ENCODE measurements at regions of chr5 and their contacts with region 1.

Region 1: GRCh38 chr5:141412854-141413539 is at the start of gene PCDHGA10:
- DNase-seq: peak in 1 of 6 donors; percentile 46
- ATAC-seq: peak; percentile 55 to 68 (median 68)
- H3K4me3 ChIP-seq: peak within 1 kb of the TSS in 1 of 4 donors; percentile 18
- H3K27ac ChIP-seq: no peak within 1 kb of the TSS
- H3K4me1 ChIP-seq: no peaks in the 10 kb centered on the region
- H3K27me3 ChIP-seq: no peaks in the 10 kb centered on the region
- CTCF ChIP-seq: peak in 2 of 4 donors; percentile 13 to 17
- total RNA-seq, gene PCDHGA10: 1.2 to 3.1 (median 2.1) TPM

Region 2: DNA sequence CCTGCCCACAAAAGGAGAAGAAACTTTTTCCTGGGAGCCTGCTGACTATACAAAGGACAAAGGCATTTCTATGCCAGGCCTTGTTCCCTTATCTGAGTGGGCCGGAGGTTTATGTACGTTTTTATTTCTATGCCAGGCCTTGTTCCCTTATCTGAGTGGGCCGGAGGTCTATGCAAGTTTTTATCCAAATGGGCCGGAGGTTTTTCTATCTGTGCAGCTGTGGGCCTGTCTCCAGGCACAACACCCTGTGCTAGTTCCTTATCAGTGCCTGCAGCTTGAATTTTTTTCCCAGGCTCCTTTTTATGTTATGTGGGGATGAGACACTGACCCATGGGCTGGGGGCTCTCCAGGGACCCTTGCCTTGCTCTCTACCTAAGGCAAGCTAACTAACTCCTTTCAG is 114.6 kb before region 1 on chr5:
- intact Hi-C with region 1: no loop called
- DNase-seq: no peak
- ATAC-seq: peak in 1 of 4 donors; percentile 46
- H3K4me3 ChIP-seq: no peak overlapping the region
- H3K27ac ChIP-seq: no peak overlapping the region
- H3K4me1 ChIP-seq: no peaks in the 10 kb centered on the region
- H3K27me3 ChIP-seq: no peaks in the 10 kb centered on the region
- CTCF ChIP-seq: no peak

Region 3: GRCh38 chr5:141524604-141525597 is 111.9 kb after region 1 on chr5:
- intact Hi-C with region 1: loop called in 1 of 3 experiments (anchors 10 kb)
- DNase-seq: peak; percentile 82 to 89 (median 84)
- ATAC-seq: peak; percentile 76 to 90 (median 86)
- H3K4me3 ChIP-seq: no peak overlapping the region
- H3K27ac ChIP-seq: peak overlapping the region in 2 of 4 donors; percentile 48 to 65
- H3K4me1 ChIP-seq: peaks cover 23 to 43% (median 31%) of the 10 kb centered on the region in 3 donors
- H3K27me3 ChIP-seq: no peaks in the 10 kb centered on the region
- CTCF ChIP-seq: peak; percentile 96 to 98 (median 98)

Measured in pancreas (tissue), 10 donors.